ENCODE measurements at regions of chr11 and their contacts with region 1.

Region 1: GRCh38 chr11:78564490-78565467 is 9.9 kb downstream of the NARS2 start:
- DNase-seq: peak; percentile 71
- H3K4me3 Mint-ChIP-seq: no peak overlapping the region
- H3K27ac Mint-ChIP-seq: no peak overlapping the region
- H3K4me1 Mint-ChIP-seq: peaks cover 22% of the 10 kb centered on the region
- H3K27me3 Mint-ChIP-seq: no peaks in the 10 kb centered on the region
- CTCF ChIP-seq: peak; percentile 71

Region 2: DNA sequence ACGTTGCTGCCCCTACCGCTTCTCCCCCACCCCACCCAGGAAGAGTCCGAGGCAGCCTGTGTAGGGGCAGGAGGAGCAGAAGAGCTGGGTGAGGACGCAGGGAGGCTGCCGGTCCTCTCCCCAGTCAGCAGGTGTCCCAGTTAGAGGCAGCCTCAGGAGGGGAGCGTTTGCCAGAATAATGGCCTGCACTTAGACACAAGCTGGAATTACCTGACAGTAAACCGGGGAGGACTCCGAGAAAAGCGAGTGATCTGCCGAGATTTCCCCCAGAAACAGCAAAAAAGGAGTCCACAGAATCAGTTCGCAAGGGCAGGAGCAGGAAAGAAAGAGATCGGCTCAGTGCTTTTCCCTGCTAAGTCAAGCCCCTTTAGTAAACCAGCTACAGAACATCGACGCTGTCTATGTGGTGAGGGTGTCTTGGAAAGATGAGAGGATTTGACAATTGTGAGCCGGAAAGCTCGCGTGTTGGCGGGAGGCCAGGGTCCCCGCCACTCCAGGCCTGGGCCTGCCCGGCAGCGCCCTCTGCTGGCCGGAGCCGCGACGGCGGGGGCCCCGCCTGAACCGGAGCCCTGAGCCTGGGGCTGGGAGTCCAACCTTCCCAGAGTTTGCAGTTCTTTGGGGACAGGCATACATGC is 518.8 kb before region 1 on chr11:
- CTCF ChIA-PET with region 1: interaction called, 10 read pairs
- POLR2A ChIA-PET with region 1: no interaction called
- intact Hi-C with region 1: no loop called
- DNase-seq: peak; percentile 69
- H3K4me3 Mint-ChIP-seq: peak overlapping the region; percentile 59
- H3K27ac Mint-ChIP-seq: no peak overlapping the region
- H3K4me1 Mint-ChIP-seq: peaks cover 9% of the 10 kb centered on the region
- H3K27me3 Mint-ChIP-seq: no peaks in the 10 kb centered on the region
- CTCF ChIP-seq: peak; percentile 93

Region 3: GRCh38 chr11:78149646-78150045 is 415.1 kb before region 1 on chr11:
- CTCF ChIA-PET with region 1: interaction called, 9 read pairs
- POLR2A ChIA-PET with region 1: no interaction called
- intact Hi-C with region 1: loop called (anchors 1 kb)
- DNase-seq: peak; percentile 47
- H3K4me3 Mint-ChIP-seq: no peak overlapping the region
- H3K27ac Mint-ChIP-seq: no peak overlapping the region
- H3K4me1 Mint-ChIP-seq: no peaks in the 10 kb centered on the region
- H3K27me3 Mint-ChIP-seq: no peaks in the 10 kb centered on the region
- CTCF ChIP-seq: peak; percentile 22

Region 4: GRCh38 chr11:78228467-78228866 is 336.3 kb before region 1 on chr11:
- CTCF ChIA-PET with region 1: interaction called, 98 read pairs
- POLR2A ChIA-PET with region 1: interaction called, 17 read pairs
- intact Hi-C with region 1: loop called (anchors 1 kb)
- DNase-seq: peak; percentile 63
- H3K4me3 Mint-ChIP-seq: no peak overlapping the region
- H3K27ac Mint-ChIP-seq: no peak overlapping the region
- H3K4me1 Mint-ChIP-seq: peaks cover 8% of the 10 kb centered on the region
- H3K27me3 Mint-ChIP-seq: no peaks in the 10 kb centered on the region
- CTCF ChIP-seq: peak; percentile 47

Region 5: DNA sequence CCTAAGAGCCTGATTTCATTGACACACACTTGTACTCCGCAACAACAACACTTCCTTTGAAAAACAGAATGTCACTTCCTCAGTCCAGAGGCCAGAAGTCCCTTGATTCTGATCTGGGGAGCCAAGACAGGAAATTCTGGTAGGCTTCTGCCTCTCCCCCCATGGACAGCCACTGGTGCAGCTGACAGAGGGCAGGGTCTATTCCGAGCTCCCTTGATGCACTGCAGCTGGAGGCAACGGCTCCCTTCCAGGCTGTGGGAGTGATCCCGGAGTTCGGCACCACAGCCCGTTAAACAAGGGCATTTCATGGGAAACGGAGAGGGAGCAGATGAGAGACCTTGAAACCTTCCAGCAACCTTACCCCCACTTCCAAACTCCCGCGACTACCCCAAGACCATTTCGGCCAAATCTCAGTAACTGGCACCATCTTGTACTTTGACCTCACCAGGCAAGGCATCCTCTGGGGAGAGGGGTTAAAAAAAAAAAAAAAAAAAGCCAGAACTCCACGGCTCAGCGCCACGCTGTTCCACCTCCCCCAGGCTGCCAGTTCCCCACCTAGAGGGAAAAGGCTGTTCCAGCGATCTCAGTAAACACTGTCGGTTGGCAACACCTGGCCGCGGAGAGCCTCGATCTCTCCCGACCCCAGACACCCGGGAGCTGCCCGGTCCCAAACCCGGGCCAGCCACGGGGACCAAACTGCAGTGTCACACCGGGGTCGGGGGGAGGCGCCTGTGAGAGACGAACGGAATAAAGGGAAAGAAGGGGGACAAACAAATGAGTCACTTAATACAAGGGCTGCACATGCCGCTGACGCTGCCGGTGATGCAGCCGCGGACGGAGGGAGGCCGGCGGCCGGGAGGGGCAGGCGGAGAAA is 148.2 kb before region 1 on chr11:
- CTCF ChIA-PET with region 1: interaction called, 58 read pairs
- POLR2A ChIA-PET with region 1: interaction called, 14 read pairs
- intact Hi-C with region 1: loop called (anchors 1 kb)
- DNase-seq: peak; percentile 66
- H3K4me3 Mint-ChIP-seq: peak overlapping the region; percentile 78
- H3K27ac Mint-ChIP-seq: peak overlapping the region; percentile 57
- H3K4me1 Mint-ChIP-seq: peaks cover 19% of the 10 kb centered on the region
- H3K27me3 Mint-ChIP-seq: no peaks in the 10 kb centered on the region
- CTCF ChIP-seq: peak; percentile 47

Region 6: GRCh38 chr11:78548911-78549590 is 15.7 kb before region 1 on chr11:
- CTCF ChIA-PET with region 1: interaction called, 30 read pairs
- POLR2A ChIA-PET with region 1: no interaction called
- intact Hi-C with region 1: no loop called
- DNase-seq: no peak
- H3K4me3 Mint-ChIP-seq: no peak overlapping the region
- H3K27ac Mint-ChIP-seq: no peak overlapping the region
- H3K4me1 Mint-ChIP-seq: no peaks in the 10 kb centered on the region
- H3K27me3 Mint-ChIP-seq: no peaks in the 10 kb centered on the region
- CTCF ChIP-seq: no peak

Region 7: GRCh38 chr11:79113054-79113690 is 548.4 kb after region 1 on chr11:
- CTCF ChIA-PET with region 1: no interaction called
- POLR2A ChIA-PET with region 1: no interaction called
- intact Hi-C with region 1: no loop called
- DNase-seq: no peak
- H3K4me3 Mint-ChIP-seq: no peak overlapping the region
- H3K27ac Mint-ChIP-seq: no peak overlapping the region
- H3K4me1 Mint-ChIP-seq: no peaks in the 10 kb centered on the region
- H3K27me3 Mint-ChIP-seq: no peaks in the 10 kb centered on the region
- CTCF ChIP-seq: no peak

Measured in MCF 10A (cell line).